ENCODE measurements at regions of chr4 and their contacts with region 1.

Region 1: DNA sequence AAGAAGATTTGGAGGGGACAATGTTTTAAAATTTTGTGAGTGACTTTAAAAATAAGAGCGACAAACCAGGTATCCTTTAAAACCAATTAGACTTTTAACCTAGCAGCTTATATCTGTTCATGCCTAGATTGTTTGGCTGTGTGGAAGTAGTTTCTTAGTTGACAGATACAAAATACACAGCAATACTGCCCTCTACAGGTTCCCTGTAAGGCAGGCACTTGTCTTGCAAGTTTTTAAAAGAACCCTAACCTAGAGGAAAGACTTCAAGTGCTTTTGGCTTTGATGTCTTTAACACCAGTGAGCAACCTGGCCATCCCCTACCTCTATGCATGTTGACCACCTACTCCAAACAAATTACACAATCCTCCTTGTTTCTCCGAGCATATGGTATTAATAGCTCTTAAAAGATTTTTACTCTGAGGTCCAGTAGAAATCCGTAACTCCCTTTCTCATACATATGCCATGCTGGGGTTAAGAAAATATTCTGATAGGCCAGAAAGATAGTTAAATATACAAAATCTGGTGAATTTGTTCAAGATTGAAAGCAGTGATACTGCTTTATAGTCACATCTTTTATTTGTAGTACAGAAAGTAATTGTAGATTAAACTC is 273.0 kb downstream of the ARHGAP24 start:
- DNase-seq: peak; percentile 75
- ATAC-seq: peak; percentile 68
- H3K4me3 ChIP-seq: no peak overlapping the region
- H3K27ac ChIP-seq: no peak overlapping the region
- H3K4me1 ChIP-seq: peaks cover 18% of the 10 kb centered on the region
- H3K27me3 ChIP-seq: no peaks in the 10 kb centered on the region
- CTCF ChIP-seq: peak; percentile 81

Region 2: DNA sequence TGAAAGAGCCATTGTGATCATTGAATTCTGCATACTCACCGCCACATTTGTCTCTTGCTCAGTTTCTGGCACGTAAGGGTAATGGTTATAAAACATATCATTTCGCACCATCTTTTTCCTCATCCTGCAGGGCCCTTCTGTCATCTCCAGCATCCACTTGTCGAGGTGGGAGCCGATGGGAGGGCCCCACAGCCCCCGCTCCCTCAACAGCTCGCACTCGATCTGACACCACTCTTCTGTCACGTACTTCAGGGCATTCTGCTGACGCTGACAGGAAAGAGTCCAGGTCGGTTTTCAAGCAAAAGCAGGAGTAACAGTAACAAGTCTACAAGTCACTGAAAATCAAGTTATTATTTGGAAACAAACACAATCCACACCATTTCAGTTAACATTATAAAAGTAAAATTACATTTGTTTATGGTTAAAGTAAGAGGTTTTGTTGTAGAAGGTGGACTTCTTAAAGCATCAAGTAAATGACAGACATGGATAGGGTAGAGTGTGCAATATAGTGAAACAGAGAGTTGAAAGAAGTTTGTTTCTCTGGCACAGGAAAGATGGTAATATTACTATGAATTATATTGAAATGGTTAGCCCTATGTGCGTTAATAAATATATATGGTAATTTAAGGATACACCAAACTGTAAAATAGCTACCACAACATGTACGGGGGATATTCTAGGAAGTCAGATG is 1014.5 kb before region 1 on chr4:
- CTCF ChIA-PET with region 1: no interaction called
- POLR2A ChIA-PET with region 1: no interaction called
- intact Hi-C with region 1: no loop called
- DNase-seq: no peak
- ATAC-seq: no peak
- H3K4me3 ChIP-seq: no peak overlapping the region
- H3K27ac ChIP-seq: no peak overlapping the region
- H3K4me1 ChIP-seq: no peaks in the 10 kb centered on the region
- H3K27me3 ChIP-seq: no peaks in the 10 kb centered on the region
- CTCF ChIP-seq: no peak

Region 3: GRCh38 chr4:85084380-85085094 is 663.5 kb before region 1 on chr4:
- CTCF ChIA-PET with region 1: no interaction called
- POLR2A ChIA-PET with region 1: no interaction called
- intact Hi-C with region 1: loop called (anchors 10 kb)
- DNase-seq: peak; percentile 75
- ATAC-seq: peak; percentile 67
- H3K4me3 ChIP-seq: no peak overlapping the region
- H3K27ac ChIP-seq: no peak overlapping the region
- H3K4me1 ChIP-seq: no peaks in the 10 kb centered on the region
- H3K27me3 ChIP-seq: no peaks in the 10 kb centered on the region
- CTCF ChIP-seq: peak; percentile 69

Region 4: DNA sequence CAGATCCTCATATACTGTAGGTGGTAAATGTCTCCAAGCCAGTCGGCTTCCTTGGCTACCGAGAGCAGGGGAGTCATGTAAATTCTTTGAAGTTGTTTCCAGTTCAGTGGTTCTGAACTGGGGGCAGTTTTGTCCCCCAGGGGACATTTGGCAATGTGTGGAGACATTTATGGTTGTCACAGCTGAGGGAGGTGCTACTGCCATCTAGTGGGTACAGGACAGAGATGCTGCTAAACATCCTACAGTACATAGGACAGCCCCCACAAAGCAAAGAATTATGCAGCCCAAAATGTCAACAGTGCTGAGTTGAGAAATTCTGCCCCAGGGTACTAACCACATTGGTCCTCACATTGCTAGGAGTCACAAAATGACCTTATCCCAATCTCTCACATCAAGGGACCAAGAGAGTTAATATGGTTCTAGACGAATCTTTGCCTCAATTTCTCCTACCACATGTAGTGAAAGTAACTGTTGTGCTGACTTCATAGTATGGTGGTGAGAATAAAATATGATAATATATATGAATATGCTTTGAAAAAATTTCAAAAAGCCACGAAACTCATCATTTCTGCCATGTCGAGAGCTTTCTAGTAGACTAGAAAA is 377.5 kb before region 1 on chr4:
- CTCF ChIA-PET with region 1: interaction called, 4 read pairs
- POLR2A ChIA-PET with region 1: no interaction called
- intact Hi-C with region 1: loop called (anchors 5 kb)
- DNase-seq: peak; percentile 49
- ATAC-seq: peak; percentile 81
- H3K4me3 ChIP-seq: no peak overlapping the region
- H3K27ac ChIP-seq: no peak overlapping the region
- H3K4me1 ChIP-seq: no peaks in the 10 kb centered on the region
- H3K27me3 ChIP-seq: 0 out of 2 replicates have a peak, but pooled peaks cover 1% of the 10 kb centered on the region
- CTCF ChIP-seq: peak; percentile 76

Region 5: DNA sequence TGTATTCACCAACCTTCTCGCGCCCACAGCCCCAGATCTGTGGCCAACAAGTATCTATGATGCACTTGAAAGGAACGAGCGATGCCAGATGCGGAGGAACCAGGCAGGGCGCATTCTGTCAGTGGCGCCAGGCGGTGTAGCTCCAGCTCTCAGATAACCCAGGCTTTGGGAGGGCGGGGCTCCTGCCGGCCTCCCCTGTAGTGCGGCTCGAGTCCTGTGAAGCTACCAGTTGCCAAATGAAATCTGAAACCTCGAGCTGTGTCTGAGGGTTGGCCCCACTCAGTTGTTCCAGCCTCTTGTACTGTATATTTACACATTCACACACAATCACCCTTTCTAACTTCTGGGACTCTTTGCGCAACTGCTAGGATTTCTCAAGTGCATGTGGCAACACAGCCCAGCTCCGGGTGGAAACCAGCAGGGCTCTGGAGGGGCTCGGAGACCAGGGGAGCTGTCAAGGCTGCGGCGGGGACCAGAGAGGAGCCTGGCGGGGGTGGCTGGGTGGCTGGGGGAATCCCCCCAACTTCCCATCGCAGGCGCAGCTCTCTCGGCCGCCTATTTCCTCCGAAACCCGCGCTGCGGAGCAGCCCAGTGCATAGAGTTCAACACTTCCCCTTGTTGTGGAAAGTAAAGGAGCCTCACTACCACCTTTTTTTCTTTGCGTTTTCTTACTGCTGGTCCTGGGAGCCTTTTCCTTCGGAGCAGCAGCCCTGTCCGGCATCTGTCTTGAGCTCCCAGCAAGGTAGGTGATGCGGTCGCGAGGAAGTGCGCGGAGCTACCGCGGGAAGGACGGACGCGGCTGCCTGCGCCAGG is 273.0 kb before region 1 on chr4 and contains the start of gene ARHGAP24:
- CTCF ChIA-PET with region 1: interaction called, 3 read pairs
- POLR2A ChIA-PET with region 1: no interaction called
- intact Hi-C with region 1: loop called (anchors 5 kb)
- DNase-seq: peak; percentile 88
- ATAC-seq: peak; percentile 99
- H3K4me3 ChIP-seq: peak within 1 kb of the TSS; percentile 80
- H3K27ac ChIP-seq: peak within 1 kb of the TSS; percentile 34
- H3K4me1 ChIP-seq: peaks cover 9% of the 10 kb centered on the region
- H3K27me3 ChIP-seq: no peaks in the 10 kb centered on the region
- CTCF ChIP-seq: no peak
- total RNA-seq, gene ARHGAP24: 7.2 and 7.4 TPM in 2 replicates

Region 6: DNA sequence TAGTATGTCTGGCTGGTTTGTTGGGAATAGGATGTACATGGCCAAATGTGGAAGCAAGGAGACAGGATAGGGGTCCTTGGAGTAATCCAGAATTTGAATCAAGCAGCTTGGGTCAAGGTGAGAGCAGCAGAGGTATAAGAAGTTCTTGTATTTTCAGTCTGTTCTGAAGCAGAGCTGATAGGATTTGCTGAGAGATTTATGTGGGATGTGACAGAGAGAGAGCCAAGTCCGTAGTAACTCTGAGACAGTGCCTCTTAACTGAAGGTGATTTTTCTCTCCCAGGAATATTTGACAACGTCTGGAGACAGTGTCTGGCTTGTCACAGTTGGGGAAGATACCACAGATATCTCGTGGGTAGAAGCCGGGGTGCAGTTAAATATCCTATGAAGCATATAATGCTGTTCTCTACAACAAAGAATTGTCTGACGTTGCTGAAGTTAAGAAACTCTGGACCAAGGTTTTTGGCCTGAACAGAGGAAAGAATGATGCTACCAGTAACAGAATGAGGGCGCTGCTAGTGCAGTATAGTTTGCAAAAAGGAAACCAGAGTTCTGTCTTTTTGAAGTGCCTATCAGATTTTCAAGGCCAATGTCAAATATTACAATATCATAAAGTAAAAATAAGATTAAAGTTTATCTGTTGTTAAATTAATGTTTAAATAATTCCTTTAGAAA is 89.1 kb before region 1 on chr4:
- CTCF ChIA-PET with region 1: no interaction called
- POLR2A ChIA-PET with region 1: no interaction called
- intact Hi-C with region 1: loop called (anchors 10 kb)
- DNase-seq: no peak
- ATAC-seq: no peak
- H3K4me3 ChIP-seq: no peak overlapping the region
- H3K27ac ChIP-seq: no peak overlapping the region
- H3K4me1 ChIP-seq: no peaks in the 10 kb centered on the region
- H3K27me3 ChIP-seq: no peaks in the 10 kb centered on the region
- CTCF ChIP-seq: peak; percentile 20; the same call in 1 of the 2 replicates

Region 7: DNA sequence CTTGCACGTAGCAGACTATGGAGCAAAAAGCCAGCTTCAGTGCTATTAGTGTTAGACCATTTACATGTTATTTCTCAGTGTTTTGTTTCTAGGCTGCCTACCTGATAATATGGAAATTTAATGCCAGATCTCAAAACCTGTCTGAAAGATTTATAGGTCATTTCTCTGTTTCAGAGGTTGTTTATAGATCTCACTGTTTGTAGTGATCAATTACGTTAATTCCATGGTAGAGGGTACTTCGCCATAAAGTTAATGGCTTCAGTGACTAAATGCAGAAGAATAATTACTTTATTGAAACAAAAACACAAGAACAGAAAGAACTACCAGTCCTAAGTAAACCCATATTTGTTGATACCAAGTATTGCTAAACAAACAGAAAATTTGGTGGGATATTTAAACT is 147.8 kb after region 1 on chr4:
- CTCF ChIA-PET with region 1: no interaction called
- POLR2A ChIA-PET with region 1: no interaction called
- intact Hi-C with region 1: no loop called
- DNase-seq: no peak
- ATAC-seq: no peak
- H3K4me3 ChIP-seq: no peak overlapping the region
- H3K27ac ChIP-seq: no peak overlapping the region
- H3K4me1 ChIP-seq: no peaks in the 10 kb centered on the region
- H3K27me3 ChIP-seq: no peaks in the 10 kb centered on the region
- CTCF ChIP-seq: no peak